ENCODE measurements at regions of chr6 and their contacts with region 1.

Region 1: GRCh38 chr6:26175428-26176181 is 88.4 kb downstream of the HFE start:
- DNase-seq: peak; percentile 88
- H3K4me3 ChIP-seq: peak overlapping the region; percentile 5
- H3K27ac ChIP-seq: peak overlapping the region; percentile 27
- H3K4me1 ChIP-seq: peaks cover 27% of the 10 kb centered on the region
- H3K27me3 ChIP-seq: no peaks in the 10 kb centered on the region
- CTCF ChIP-seq: peak; percentile 79

Region 2: DNA sequence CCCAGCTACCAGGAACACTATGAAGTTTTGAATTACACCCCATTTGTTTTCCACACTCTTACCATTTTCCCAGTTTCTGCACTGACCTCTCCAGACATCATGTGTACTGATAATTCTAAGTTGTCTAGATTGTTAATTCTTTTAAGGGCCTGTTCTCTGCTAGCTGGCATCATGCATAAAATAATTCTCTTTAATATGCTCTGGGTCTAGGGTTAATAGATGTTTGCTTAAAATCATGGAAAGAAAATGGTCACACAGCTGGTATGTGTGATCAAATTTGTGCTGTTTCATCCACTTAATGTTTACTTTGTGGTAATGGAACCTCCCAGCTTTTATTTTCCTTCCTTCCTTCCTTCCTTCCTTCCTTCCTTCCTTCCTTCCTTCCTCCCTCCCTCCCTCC is 39.3 kb before region 1 on chr6:
- CTCF ChIA-PET with region 1: no interaction called
- POLR2A ChIA-PET with region 1: interaction called, 11 read pairs
- intact Hi-C with region 1: no loop called
- DNase-seq: peak; percentile 90
- H3K4me3 ChIP-seq: no peak overlapping the region
- H3K27ac ChIP-seq: peak overlapping the region; percentile 96
- H3K4me1 ChIP-seq: peaks cover 79% of the 10 kb centered on the region
- H3K27me3 ChIP-seq: no peaks in the 10 kb centered on the region
- CTCF ChIP-seq: no peak

Region 3: DNA sequence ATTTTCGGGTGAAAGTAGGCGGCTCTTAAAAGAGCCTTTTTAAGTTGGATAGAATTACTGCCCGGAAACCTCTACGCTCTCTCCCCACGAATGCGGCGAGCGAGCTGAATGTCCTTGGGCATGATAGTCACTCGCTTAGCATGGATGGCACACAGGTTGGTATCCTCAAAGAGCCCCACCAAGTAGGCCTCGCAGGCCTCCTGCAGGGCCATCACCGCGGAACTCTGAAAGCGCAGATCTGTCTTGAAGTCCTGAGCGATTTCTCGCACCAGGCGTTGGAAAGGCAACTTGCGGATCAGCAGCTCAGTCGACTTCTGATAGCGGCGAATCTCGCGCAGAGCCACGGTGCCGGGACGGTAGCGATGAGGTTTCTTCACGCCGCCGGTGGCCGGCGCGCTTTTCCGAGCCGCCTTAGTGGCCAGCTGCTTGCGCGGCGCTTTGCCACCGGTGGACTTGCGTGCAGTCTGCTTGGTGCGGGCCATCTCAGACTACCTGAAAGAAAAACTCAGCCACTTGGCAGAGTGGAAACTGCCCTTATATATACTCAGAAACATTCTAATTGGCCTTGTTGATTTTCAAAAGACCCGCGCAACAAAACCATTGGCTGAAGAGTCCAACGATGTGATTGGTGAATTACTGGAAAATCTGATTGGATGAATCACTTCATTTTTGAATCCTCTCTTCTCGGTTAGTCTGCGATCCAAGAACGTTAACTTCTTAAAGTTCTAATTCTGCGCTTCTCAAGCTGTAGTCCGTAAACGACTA is 95.5 kb after region 1 on chr6:
- CTCF ChIA-PET with region 1: interaction called, 10 read pairs
- POLR2A ChIA-PET with region 1: interaction called, 3 read pairs
- intact Hi-C with region 1: no loop called
- DNase-seq: peak; percentile 97
- H3K4me3 ChIP-seq: peak overlapping the region; percentile 66
- H3K27ac ChIP-seq: peak overlapping the region; percentile 94
- H3K4me1 ChIP-seq: peaks cover 16% of the 10 kb centered on the region
- H3K27me3 ChIP-seq: no peaks in the 10 kb centered on the region
- CTCF ChIP-seq: no peak

Region 4: GRCh38 chr6:26285143-26286134 is 109.8 kb after region 1 on chr6:
- CTCF ChIA-PET with region 1: interaction called, 3 read pairs
- POLR2A ChIA-PET with region 1: no interaction called
- intact Hi-C with region 1: loop called (anchors 10 kb)
- DNase-seq: peak; percentile 99
- H3K4me3 ChIP-seq: peak overlapping the region; percentile 57
- H3K27ac ChIP-seq: peak overlapping the region; percentile 92
- H3K4me1 ChIP-seq: peaks cover 3% of the 10 kb centered on the region
- H3K27me3 ChIP-seq: no peaks in the 10 kb centered on the region
- CTCF ChIP-seq: no peak

Region 5: DNA sequence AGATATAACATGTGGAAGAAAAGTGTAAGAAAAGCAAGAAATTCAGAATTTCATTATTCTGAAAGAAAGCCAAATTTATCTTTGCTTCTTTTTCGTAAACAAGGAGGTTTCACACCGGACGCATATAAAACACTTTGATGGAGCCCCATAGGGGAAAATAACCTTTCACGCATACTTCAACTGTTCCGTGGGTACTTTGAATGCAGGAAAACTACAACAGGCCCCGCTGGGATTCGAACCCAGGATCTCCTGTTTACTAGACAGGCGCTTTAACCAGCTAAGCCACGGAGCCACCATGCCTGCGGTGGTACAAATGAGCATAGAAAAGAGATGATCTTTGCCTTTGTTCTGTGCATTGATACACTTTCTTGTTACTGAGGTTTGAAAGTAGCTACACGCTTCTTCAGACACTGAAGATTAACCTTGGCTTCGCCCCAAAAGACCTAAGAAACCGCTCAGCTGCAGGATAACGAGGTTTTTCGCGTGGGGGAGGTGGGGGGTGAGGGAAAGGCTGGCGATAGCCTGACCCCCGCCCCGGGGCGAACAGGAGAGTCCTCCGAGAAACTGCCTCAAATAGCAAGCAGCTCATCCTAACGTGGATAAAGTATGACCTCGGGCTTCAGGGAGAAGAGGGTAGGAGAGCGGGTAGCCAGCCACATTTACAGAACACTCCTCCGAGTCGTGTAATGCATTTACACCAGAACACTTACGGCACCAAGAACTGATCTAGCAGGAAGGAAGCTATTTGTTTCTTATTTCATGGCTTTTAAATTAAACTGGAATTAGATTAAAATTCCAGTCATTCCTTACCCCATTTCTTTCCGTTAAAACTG is 357.3 kb after region 1 on chr6:
- CTCF ChIA-PET with region 1: interaction called, 10 read pairs
- POLR2A ChIA-PET with region 1: no interaction called
- intact Hi-C with region 1: no loop called
- DNase-seq: peak; percentile 96
- H3K4me3 ChIP-seq: peak overlapping the region; percentile 64
- H3K27ac ChIP-seq: peak overlapping the region; percentile 93
- H3K4me1 ChIP-seq: peaks cover 28% of the 10 kb centered on the region
- H3K27me3 ChIP-seq: no peaks in the 10 kb centered on the region
- CTCF ChIP-seq: no peak

Region 6: GRCh38 chr6:26553635-26554446 is 378.2 kb after region 1 on chr6:
- CTCF ChIA-PET with region 1: no interaction called
- POLR2A ChIA-PET with region 1: no interaction called
- intact Hi-C with region 1: loop called (anchors 10 kb)
- DNase-seq: peak; percentile 89
- H3K4me3 ChIP-seq: peak overlapping the region; percentile 61
- H3K27ac ChIP-seq: peak overlapping the region; percentile 69
- H3K4me1 ChIP-seq: no peaks in the 10 kb centered on the region
- H3K27me3 ChIP-seq: no peaks in the 10 kb centered on the region
- CTCF ChIP-seq: no peak

Region 7: GRCh38 chr6:26596579-26597388 is 421.2 kb after region 1 on chr6 and contains the start of gene ABT1:
- CTCF ChIA-PET with region 1: no interaction called
- POLR2A ChIA-PET with region 1: no interaction called
- intact Hi-C with region 1: loop called (anchors 2 kb)
- DNase-seq: peak; percentile 99
- H3K4me3 ChIP-seq: peak within 1 kb of the TSS; percentile 90
- H3K27ac ChIP-seq: peak within 1 kb of the TSS; percentile 82
- H3K4me1 ChIP-seq: peaks cover 7% of the 10 kb centered on the region
- H3K27me3 ChIP-seq: no peaks in the 10 kb centered on the region
- CTCF ChIP-seq: no peak
- total RNA-seq, gene ABT1: 17.4 and 18.1 TPM in 2 replicates